PC-9 (cell line): ENCODE measurements at regions of chr19 and their contacts with region 1.

Region 1: DNA sequence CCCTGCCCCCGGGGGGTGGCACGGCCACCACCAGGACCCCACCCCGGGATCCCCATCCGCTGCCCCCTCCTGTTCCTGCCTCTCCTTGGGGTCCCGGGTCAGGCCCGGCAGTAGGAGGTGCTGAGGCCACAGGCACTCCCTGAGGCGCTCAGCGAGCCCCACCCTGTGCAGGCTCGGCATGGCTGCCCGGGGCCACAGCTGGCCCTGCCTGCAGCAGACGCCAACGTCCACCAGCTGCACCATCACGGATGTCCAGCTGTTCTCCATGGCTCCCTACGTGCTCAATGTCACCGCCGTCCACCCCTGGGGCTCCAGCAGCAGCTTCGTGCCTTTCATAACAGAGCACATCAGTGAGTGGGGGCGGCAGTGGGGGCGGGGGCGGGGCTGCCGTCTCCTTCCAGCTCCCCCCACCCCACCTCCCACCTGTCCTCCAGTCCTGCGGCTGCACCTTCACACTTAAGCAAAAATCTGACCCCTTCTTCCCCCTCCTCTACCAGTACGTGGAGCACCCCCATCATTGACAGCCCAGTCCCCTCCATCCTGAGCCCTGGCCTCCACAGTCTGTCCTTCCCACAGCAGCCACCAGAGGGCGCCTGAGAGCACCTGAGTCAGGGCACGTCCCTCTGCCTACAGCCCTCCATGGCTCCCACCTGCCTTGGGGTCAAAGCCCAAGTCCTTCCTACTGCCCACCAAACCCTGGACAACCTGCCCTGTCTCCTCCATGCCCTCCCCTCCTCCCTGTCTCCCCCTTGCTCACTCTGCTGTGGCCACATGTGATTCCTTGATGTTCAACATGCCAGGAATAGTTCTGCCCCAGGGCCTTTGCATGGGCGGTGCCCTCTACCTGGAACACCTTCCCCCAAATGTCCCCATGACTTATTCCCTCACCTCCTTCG is 3.9 kb downstream of the EBI3 start:
- DNase-seq: peak in 1 of 2 experiments; percentile 48
- H3K4me3 ChIP-seq: no peak overlapping the region
- H3K27ac ChIP-seq: no peak overlapping the region
- H3K4me1 ChIP-seq: no peaks in the 10 kb centered on the region
- H3K27me3 ChIP-seq: no peaks in the 10 kb centered on the region
- CTCF ChIP-seq: peak; percentile 78

Region 2: GRCh38 chr19:4144666-4145256 is 88.4 kb before region 1 on chr19:
- CTCF ChIA-PET with region 1: interaction called, 15 read pairs
- POLR2A ChIA-PET with region 1: no interaction called
- intact Hi-C with region 1: no loop called
- DNase-seq: peak; percentile 50 to 67
- H3K4me3 ChIP-seq: no peak overlapping the region
- H3K27ac ChIP-seq: peak overlapping the region; percentile 68
- H3K4me1 ChIP-seq: peaks cover 10% of the 10 kb centered on the region
- H3K27me3 ChIP-seq: no peaks in the 10 kb centered on the region
- CTCF ChIP-seq: no peak